Activated CD8-positive, alpha-beta T cell treated with anti-CD3 and anti-CD28 coated beads, Interleukin-2, amount 10 ng/mL, durations not matched to agents 7 days and 5 days (primary cell): ENCODE measurements at regions of chrX and their contacts with region 1.

Region 1: DNA sequence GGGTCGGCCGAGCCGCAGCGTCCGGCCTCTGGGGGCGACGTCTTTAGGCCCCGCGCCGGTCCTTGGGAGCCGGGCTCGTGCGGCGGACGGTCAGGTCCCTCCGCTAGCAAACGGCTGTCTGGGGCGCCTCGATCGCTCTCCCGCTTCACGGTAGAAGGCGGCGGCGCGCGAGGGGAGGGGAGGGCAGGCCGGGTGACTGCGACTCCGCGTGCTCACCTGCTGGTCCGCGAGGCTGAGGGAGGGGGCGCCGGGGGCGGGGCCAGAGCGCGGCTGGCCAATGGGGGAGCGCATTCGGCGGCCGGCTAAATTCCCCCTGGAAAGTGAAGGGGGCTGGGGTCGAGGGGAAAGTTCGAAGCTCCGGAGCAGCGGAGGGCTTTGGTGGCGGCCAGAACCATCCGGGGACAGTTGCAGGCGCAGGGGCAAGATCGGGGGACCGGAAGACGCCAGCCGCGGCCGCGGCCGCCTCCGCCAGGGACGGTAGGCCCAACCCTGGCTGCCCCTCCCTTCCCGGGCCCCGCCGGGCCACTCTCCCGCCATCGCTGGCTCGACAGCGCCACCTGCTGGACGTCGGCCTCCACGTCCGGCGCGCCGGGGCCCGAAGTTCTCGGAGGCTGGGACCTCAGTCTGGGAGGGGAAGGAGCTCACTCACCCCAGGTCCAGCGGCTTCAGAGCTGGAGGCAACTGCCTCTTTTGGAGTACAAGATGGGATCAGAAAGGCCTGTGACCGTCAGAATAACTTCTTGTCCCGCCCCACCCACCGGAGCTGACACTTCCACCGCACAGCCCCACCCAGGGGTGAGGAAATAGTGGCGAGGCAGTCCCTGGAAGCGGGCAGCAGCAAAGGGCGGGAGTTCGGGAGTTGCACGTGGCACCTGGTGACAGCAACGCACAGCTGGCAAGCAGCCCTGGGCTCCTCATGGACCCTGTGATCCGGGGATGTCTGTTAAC is 49.9 kb downstream of the ELF4 start:
- DNase-seq: peak; percentile 82
- ATAC-seq: peak; percentile 94
- H3K4me3 Mint-ChIP-seq: peak overlapping the region; percentile 72
- H3K27ac Mint-ChIP-seq: peak overlapping the region; percentile 79
- H3K4me1 Mint-ChIP-seq: peaks cover 7% of the 10 kb centered on the region
- H3K27me3 Mint-ChIP-seq: no peaks in the 10 kb centered on the region

Region 2: GRCh38 chrX:129823115-129823514 is 237.3 kb before region 1 on chrX:
- CTCF ChIA-PET with region 1: interaction called, 14 read pairs
- POLR2A ChIA-PET with region 1: no interaction called
- DNase-seq: peak; percentile 70
- ATAC-seq: peak; percentile 82
- H3K4me3 Mint-ChIP-seq: no peak overlapping the region
- H3K27ac Mint-ChIP-seq: no peak overlapping the region
- H3K4me1 Mint-ChIP-seq: peaks cover 14% of the 10 kb centered on the region
- H3K27me3 Mint-ChIP-seq: no peaks in the 10 kb centered on the region

Region 3: DNA sequence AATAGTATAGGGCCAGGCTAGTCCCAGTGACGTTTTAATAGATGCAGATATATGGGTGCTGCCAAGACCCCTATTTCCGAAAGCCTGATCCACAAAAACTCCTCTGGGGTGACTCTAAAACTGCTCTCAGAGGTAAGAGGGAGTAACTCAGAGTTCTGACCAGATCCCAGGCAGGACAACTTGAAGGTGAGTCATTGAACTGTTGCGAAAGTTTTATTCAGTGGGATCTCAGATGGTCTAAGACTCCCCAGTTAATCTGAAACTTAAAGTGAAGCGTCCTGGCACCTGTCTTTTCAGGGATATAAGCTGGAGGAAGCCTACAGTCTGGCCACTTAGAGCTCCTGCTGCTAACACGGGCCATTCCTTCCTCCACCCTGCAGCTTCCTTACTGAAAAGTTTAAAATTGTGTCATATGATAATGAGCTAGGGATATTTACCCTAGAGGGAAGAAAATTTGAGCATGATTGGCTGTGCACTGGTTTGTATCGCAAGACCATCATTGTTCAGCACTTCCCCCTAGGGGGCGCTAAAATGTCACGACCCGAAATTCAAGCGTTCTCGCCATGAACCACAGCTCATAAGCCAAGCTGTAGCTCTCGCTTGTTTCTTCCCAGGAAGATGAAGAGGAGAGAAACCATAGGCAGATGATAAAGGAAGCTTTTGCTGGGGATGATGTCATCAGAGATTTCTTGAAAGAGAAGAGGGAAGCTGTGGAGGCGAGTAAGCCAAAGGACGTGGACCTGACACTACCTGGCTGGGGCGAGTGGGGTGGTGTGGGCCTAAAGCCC is 134.9 kb before region 1 on chrX:
- CTCF ChIA-PET with region 1: interaction called, 89 read pairs
- POLR2A ChIA-PET with region 1: interaction called, 3 read pairs
- DNase-seq: peak; percentile 80
- ATAC-seq: peak; percentile 75
- H3K4me3 Mint-ChIP-seq: no peak overlapping the region
- H3K27ac Mint-ChIP-seq: no peak overlapping the region
- H3K4me1 Mint-ChIP-seq: peaks cover 4% of the 10 kb centered on the region
- H3K27me3 Mint-ChIP-seq: no peaks in the 10 kb centered on the region

Region 4: DNA sequence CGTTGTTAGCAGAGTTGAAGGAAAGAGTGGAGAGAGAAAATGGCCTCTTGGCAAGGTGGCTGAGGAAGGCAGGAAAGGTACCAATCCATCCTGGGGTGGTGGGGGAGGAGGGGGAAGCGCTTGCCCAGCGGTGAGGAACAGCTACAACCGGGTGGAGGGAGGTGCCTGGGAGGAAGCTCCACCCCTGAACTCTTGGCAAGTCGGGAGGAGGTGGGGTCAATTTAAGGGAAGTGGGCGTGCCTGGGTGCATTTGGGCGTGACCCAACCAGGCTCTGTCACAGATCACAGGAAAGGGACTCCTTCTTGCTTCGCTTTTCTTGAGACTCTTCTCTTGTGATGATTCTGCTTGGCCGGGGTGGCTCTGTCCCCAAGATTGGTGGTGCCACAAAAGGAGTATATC is 36.3 kb before region 1 on chrX:
- CTCF ChIA-PET with region 1: interaction called, 10 read pairs
- POLR2A ChIA-PET with region 1: no interaction called
- DNase-seq: peak; percentile 91
- ATAC-seq: peak; percentile 100
- H3K4me3 Mint-ChIP-seq: peak overlapping the region; percentile 45
- H3K27ac Mint-ChIP-seq: peak overlapping the region; percentile 72
- H3K4me1 Mint-ChIP-seq: peaks cover 13% of the 10 kb centered on the region
- H3K27me3 Mint-ChIP-seq: no peaks in the 10 kb centered on the region

Region 5: DNA sequence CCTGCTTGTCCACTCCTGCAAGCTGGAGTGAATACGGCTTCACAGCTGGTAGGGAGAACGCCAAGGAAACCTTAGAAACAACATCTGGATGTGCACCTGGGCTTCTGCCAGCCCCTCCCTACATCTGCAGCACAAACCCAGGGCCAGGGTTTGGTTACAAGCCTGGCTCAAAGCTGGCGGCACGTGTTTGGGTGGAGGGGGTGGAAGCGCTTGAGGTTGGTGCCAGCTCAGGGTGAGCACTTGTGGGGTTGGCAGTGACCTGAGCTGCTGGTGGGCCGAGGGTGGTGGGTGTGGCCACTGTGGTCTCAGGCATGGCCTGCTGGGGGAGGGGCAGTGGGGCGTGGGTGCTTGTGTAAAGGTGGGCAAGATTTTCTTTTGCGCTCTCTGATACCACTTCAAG is 34.3 kb after region 1 on chrX:
- CTCF ChIA-PET with region 1: no interaction called
- POLR2A ChIA-PET with region 1: no interaction called
- DNase-seq: no peak
- ATAC-seq: no peak
- H3K4me3 Mint-ChIP-seq: no peak overlapping the region
- H3K27ac Mint-ChIP-seq: no peak overlapping the region
- H3K4me1 Mint-ChIP-seq: peaks cover 67% of the 10 kb centered on the region
- H3K27me3 Mint-ChIP-seq: no peaks in the 10 kb centered on the region